ENCODE measurements at regions of chr4 and their contacts with region 1.

Region 1: GRCh38 chr4:140252742-140253555 is 99.0 kb upstream of the MAML3 start:
- DNase-seq: peak; percentile 16 to 80 (median 64)
- ATAC-seq: peak; percentile 78
- H3K4me3 ChIP-seq: peak overlapping the region; percentile 53 to 58
- H3K4me3 Mint-ChIP-seq: peak overlapping the region; percentile 75
- H3K27ac ChIP-seq: peak overlapping the region in 1 of 2 experiments; percentile 25
- H3K27ac Mint-ChIP-seq: no peak overlapping the region
- H3K4me1 ChIP-seq: no peaks in the 10 kb centered on the region
- H3K4me1 Mint-ChIP-seq: peaks cover 10% of the 10 kb centered on the region
- H3K27me3 ChIP-seq: peaks cover 0 to 2% of the 10 kb centered on the region in 2 experiments
- H3K27me3 Mint-ChIP-seq: peaks cover 11% of the 10 kb centered on the region
- CTCF ChIP-seq: peak; percentile 91

Region 2: GRCh38 chr4:139501927-139502899 is 750.7 kb before region 1 on chr4:
- CTCF ChIA-PET with region 1: no interaction called
- POLR2A ChIA-PET with region 1: no interaction called
- intact Hi-C with region 1: loop called in 1 of 2 experiments (anchors 5 kb)
- DNase-seq: no peak
- ATAC-seq: no peak
- H3K4me3 ChIP-seq: no peak overlapping the region
- H3K4me3 Mint-ChIP-seq: no peak overlapping the region
- H3K27ac ChIP-seq: no peak overlapping the region
- H3K27ac Mint-ChIP-seq: no peak overlapping the region
- H3K4me1 ChIP-seq: no peaks in the 10 kb centered on the region
- H3K4me1 Mint-ChIP-seq: no peaks in the 10 kb centered on the region
- H3K27me3 ChIP-seq: no peaks in the 10 kb centered on the region
- H3K27me3 Mint-ChIP-seq: peaks cover 6% of the 10 kb centered on the region
- CTCF ChIP-seq: no peak

Region 3: GRCh38 chr4:139651282-139652194 is 601.4 kb before region 1 on chr4:
- CTCF ChIA-PET with region 1: interaction called, 3 read pairs
- POLR2A ChIA-PET with region 1: no interaction called
- intact Hi-C with region 1: loop called (anchors 1 to 5 kb)
- DNase-seq: peak; percentile 25 to 81 (median 64)
- ATAC-seq: peak; percentile 83
- H3K4me3 ChIP-seq: no peak overlapping the region
- H3K4me3 Mint-ChIP-seq: peak overlapping the region; percentile 0
- H3K27ac ChIP-seq: no peak overlapping the region
- H3K27ac Mint-ChIP-seq: no peak overlapping the region
- H3K4me1 ChIP-seq: no peaks in the 10 kb centered on the region
- H3K4me1 Mint-ChIP-seq: peaks cover 4% of the 10 kb centered on the region
- H3K27me3 ChIP-seq: no peaks in the 10 kb centered on the region
- H3K27me3 Mint-ChIP-seq: peaks cover 2% of the 10 kb centered on the region
- CTCF ChIP-seq: peak; percentile 91

Region 4: GRCh38 chr4:139734875-139735380 is 518.0 kb before region 1 on chr4:
- CTCF ChIA-PET with region 1: interaction called, 8 read pairs
- POLR2A ChIA-PET with region 1: no interaction called
- intact Hi-C with region 1: loop called (anchors 1 to 2 kb)
- DNase-seq: peak; percentile 8 to 68 (median 50)
- ATAC-seq: peak; percentile 77
- H3K4me3 ChIP-seq: peak overlapping the region; percentile 28 to 58
- H3K4me3 Mint-ChIP-seq: peak overlapping the region; percentile 76
- H3K27ac ChIP-seq: no peak overlapping the region
- H3K27ac Mint-ChIP-seq: no peak overlapping the region
- H3K4me1 ChIP-seq: peaks cover 7% of the 10 kb centered on the region
- H3K4me1 Mint-ChIP-seq: peaks cover 15% of the 10 kb centered on the region
- H3K27me3 ChIP-seq: peaks cover 8 to 9% of the 10 kb centered on the region in 2 experiments
- H3K27me3 Mint-ChIP-seq: peaks cover 23% of the 10 kb centered on the region
- CTCF ChIP-seq: peak; percentile 22

Region 5: DNA sequence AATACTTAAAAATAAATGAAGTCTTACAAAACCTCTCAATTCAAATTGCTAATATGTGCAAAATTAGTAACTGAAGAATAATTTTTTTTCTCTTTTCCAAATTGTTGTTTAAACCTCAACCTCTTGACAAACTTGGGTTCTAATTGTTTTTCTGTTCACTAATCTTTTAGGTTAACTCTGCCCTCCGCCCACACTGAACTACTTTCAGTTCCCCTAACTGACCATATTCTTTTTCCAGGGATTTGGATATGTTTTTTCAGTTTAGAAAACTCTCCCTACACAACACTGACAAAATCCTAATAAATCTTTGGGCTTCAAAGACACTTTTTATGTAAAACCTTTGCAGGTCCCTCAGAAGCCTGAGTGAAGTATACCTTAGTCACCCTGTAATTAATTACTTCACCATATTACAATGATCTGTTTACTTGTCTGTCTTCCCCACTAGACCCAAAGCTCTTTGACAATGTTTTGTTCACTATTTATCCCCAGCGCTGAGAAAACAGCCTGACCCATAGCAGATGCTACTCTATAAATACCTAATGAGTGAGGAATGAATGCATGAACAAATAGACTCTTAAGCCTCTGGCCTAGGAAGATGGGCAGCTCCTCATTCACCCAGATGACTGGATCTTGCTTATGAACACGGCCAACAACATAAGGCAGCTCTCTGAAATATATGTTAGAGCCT is 233.9 kb before region 1 on chr4:
- CTCF ChIA-PET with region 1: interaction called, 100 read pairs
- POLR2A ChIA-PET with region 1: interaction called, 4 read pairs
- intact Hi-C with region 1: no loop called
- DNase-seq: no peak
- ATAC-seq: no peak
- H3K4me3 ChIP-seq: no peak overlapping the region
- H3K4me3 Mint-ChIP-seq: no peak overlapping the region
- H3K27ac ChIP-seq: no peak overlapping the region
- H3K27ac Mint-ChIP-seq: no peak overlapping the region
- H3K4me1 ChIP-seq: no peaks in the 10 kb centered on the region
- H3K4me1 Mint-ChIP-seq: no peaks in the 10 kb centered on the region
- H3K27me3 ChIP-seq: no peaks in the 10 kb centered on the region
- H3K27me3 Mint-ChIP-seq: no peaks in the 10 kb centered on the region
- CTCF ChIP-seq: no peak

Region 6: GRCh38 chr4:140116442-140117104 is 136.4 kb before region 1 on chr4:
- CTCF ChIA-PET with region 1: no interaction called
- POLR2A ChIA-PET with region 1: no interaction called
- intact Hi-C with region 1: no loop called
- DNase-seq: peak in 4 of 9 experiments; percentile 16 to 38 (median 24)
- ATAC-seq: peak; percentile 92
- H3K4me3 ChIP-seq: no peak overlapping the region
- H3K4me3 Mint-ChIP-seq: no peak overlapping the region
- H3K27ac ChIP-seq: no peak overlapping the region
- H3K27ac Mint-ChIP-seq: no peak overlapping the region
- H3K4me1 ChIP-seq: peaks cover 12% of the 10 kb centered on the region
- H3K4me1 Mint-ChIP-seq: peaks cover 20% of the 10 kb centered on the region
- H3K27me3 ChIP-seq: no peaks in the 10 kb centered on the region
- H3K27me3 Mint-ChIP-seq: no peaks in the 10 kb centered on the region
- CTCF ChIP-seq: no peak

Region 7: GRCh38 chr4:140237606-140237986 is 15.4 kb before region 1 on chr4:
- CTCF ChIA-PET with region 1: interaction called, 37 read pairs
- POLR2A ChIA-PET with region 1: no interaction called
- intact Hi-C with region 1: no loop called
- DNase-seq: no peak
- ATAC-seq: no peak
- H3K4me3 ChIP-seq: no peak overlapping the region
- H3K4me3 Mint-ChIP-seq: no peak overlapping the region
- H3K27ac ChIP-seq: no peak overlapping the region
- H3K27ac Mint-ChIP-seq: no peak overlapping the region
- H3K4me1 ChIP-seq: peaks cover 12% of the 10 kb centered on the region
- H3K4me1 Mint-ChIP-seq: peaks cover 21% of the 10 kb centered on the region
- H3K27me3 ChIP-seq: no peaks in the 10 kb centered on the region
- H3K27me3 Mint-ChIP-seq: peaks cover 3% of the 10 kb centered on the region
- CTCF ChIP-seq: no peak

Region 8: DNA sequence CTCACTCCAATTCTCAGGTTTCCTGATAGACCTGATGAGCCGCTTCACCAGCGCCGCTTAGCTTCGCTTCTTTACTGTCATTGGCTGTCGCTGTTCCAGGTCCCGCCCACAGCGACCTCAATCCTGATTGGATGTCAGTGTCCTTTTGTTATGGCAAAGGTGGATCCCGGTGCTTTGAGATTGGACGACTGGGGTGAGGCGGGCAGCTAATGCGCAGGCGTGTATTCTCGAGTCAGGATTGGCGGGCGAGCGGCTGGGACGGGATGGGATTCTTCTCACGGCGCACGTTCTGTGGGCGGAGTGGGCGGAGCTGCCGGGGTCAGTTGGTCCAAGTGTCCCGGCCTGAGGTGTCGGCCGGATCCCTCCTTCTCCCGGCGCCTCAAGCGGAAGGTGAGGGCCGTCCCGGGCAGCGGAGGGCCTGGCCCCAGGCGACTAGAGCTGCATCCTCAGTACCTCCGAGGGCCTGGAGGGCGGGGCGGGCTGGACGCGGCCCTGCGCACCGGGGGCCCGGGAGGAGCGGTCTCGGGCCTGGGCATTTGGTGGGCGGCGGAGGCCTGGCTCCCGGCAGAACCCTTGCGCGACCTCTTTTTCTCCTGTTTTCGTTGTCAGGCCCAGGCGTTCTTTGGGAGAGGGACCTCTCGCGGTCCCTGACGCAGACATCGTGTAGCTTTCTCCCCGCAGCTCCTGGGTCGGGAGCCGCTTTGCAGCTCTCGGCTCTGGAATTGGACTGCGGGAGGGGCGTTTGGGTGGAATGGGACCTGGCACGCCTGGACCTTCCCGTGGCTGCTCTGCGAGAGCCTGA is 120.6 kb after region 1 on chr4 and contains the start of gene SCOC:
- CTCF ChIA-PET with region 1: no interaction called
- POLR2A ChIA-PET with region 1: no interaction called
- intact Hi-C with region 1: loop called in 1 of 2 experiments (anchors 5 kb)
- DNase-seq: peak; percentile 90 to 98 (median 95)
- ATAC-seq: peak; percentile 94
- H3K4me3 ChIP-seq: peak within 1 kb of the TSS; percentile 85 to 92
- H3K4me3 Mint-ChIP-seq: no peak within 1 kb of the TSS
- H3K27ac ChIP-seq: peak within 1 kb of the TSS; percentile 81 to 85
- H3K27ac Mint-ChIP-seq: peak within 1 kb of the TSS; percentile 76
- H3K4me1 ChIP-seq: peaks cover 20% of the 10 kb centered on the region
- H3K4me1 Mint-ChIP-seq: peaks cover 37% of the 10 kb centered on the region
- H3K27me3 ChIP-seq: no peaks in the 10 kb centered on the region
- H3K27me3 Mint-ChIP-seq: no peaks in the 10 kb centered on the region
- CTCF ChIP-seq: no peak
- total RNA-seq, gene SCOC: 7.1 to 8.3 TPM

Measured in CD8-positive, alpha-beta T cell (primary cell).